ENCODE measurements at regions of chr10 and their contacts with region 1.

Region 1: DNA sequence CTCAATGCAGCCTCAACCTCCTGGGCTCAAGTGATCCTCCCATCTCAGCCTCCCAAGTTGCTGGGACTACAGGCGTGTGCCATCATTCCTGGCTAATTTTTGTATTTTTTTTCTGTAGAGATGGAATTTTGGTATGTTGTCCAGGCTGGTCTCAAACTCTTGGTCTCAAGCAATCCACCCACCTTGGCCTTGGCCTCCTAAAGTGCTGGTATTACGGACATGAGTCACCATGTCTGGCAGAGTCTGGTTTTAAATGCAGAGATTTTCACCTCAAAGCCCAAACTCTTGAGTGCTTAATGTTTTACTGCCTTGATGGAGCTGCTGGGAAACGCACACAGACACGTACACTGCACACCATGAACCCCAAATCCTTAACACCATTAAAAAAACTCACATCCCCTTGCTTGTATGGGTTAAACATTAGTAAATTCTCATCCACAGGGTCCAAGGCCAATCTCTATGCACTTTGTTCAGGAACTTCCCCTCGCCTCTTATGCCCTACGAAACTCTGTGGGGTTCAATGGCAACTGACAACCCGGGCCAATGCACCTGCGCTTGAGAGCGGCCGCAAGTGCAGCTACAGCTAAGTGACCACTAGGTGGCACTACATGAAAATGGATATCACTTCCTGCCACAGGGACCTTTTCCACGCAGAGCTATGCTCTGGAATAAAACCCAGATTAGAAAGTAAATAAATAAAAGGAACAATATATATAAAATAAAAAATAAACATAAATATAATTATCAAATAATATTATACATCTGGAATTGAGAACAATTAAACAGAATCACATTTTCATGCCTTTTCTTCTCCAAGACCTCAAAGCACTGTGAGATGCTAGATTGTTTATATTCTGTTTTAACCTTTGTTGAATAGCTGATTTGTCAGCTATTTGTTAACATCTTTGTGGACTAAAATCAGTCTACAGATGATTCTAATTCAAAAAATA is 66.9 kb upstream of the AFAP1L2 start:
- H3K4me3 ChIP-seq: no peak overlapping the region
- H3K27ac ChIP-seq: no peak overlapping the region
- H3K4me1 ChIP-seq: no peaks in the 10 kb centered on the region
- CTCF ChIP-seq: 0 out of 2 replicates have a peak, but pooled peaks have one; percentile 26

Region 2: GRCh38 chr10:114458955-114459354 is 12.3 kb before region 1 on chr10:
- CTCF ChIA-PET with region 1: interaction called, 15 read pairs
- POLR2A ChIA-PET with region 1: interaction called, 3 read pairs
- H3K4me3 ChIP-seq: no peak overlapping the region
- H3K27ac ChIP-seq: no peak overlapping the region
- H3K4me1 ChIP-seq: no peaks in the 10 kb centered on the region
- CTCF ChIP-seq: no peak

Region 3: DNA sequence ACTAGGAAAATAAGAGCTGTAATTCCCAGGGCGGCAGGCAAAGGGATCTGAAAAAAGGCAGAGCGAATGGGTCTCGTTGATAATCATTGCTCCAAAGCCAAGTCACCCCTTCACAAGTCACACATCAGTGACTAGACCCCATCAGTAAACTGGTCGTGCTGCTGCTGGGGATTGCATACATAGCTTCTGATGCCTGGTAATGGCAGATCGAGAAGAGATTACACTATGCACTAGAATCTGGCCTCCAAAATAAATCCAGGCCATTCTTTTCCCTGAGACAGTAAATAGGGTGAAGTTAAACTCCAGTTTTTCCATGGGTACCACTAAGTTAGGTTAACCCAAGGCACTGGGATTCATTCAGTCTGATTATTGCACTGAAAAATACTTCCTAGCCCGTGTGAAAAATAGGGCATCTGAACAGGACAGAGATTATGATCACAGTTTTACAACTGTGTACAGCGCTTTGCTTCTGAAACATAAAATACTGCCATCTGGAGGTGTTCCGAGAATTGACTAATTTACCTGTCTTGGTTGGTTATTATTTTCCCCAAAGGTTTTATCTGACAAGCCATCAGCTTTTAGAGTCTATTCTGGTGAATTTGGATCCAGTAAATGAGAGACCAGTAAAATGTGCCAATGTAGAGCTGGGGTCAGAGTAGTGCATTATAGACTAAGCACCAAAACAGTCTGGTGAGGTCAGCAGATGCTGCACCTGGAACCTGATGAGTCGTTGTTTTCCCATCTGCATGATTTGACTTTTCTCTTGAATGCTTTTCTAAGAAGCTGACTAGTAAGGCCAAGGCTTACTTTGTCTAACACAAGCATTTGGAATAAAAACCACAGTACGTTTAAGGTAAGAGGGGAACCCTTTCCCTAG is 15.9 kb after region 1 on chr10:
- CTCF ChIA-PET with region 1: interaction called, 40 read pairs
- POLR2A ChIA-PET with region 1: no interaction called
- H3K4me3 ChIP-seq: no peak overlapping the region
- H3K27ac ChIP-seq: no peak overlapping the region
- H3K4me1 ChIP-seq: no peaks in the 10 kb centered on the region
- CTCF ChIP-seq: no peak

Region 4: DNA sequence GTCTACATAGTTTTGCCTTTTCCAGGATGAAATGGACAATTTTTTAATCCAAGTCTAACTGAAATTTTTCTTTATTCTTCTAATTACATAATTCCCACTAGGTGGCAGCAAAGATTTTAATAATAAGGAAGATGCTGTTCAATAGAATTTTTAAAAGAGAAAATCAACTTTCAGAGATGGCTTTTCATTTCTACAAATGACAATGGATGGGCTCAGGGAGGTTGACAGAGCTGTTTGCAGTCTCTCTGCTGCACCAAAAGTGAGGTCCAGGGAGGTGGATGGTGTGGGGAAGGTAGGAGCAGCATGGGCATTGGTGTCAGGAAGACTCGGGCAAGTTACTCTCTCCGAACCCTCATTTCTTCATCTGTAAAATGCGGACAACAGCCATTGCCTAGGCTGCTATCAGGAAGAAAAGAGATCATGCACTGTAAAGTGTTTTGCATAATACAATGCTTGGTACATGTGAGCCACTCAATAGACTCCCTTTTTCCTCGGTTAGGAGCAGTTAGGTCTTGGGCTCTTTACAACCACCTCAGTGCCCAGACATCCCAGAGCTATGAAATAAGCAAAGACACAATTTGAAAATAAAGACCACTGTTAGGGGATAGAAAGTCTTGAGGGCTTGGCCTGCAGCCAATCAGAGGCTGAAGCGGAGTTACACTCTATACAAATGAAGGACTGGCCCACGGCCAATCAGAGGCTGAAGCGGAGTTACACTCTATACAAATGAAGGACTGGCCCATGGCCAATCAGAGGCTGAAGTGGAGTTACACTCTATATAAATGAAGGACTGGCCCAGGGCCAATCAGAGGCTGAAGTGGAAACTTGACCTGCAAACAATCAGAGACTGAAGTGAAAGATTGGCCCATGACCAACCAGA is 79.8 kb after region 1 on chr10:
- CTCF ChIA-PET with region 1: interaction called, 16 read pairs
- POLR2A ChIA-PET with region 1: no interaction called
- H3K4me3 ChIP-seq: no peak overlapping the region
- H3K27ac ChIP-seq: peak overlapping the region; percentile 38
- H3K4me1 ChIP-seq: peaks cover 10% of the 10 kb centered on the region
- CTCF ChIP-seq: no peak

Region 5: GRCh38 chr10:114703377-114704107 is 232.3 kb after region 1 on chr10:
- CTCF ChIA-PET with region 1: interaction called, 12 read pairs
- POLR2A ChIA-PET with region 1: no interaction called
- H3K4me3 ChIP-seq: no peak overlapping the region
- H3K27ac ChIP-seq: no peak overlapping the region
- H3K4me1 ChIP-seq: peaks cover 10% of the 10 kb centered on the region; the same call in 1 of the 2 replicates
- CTCF ChIP-seq: peak; percentile 52

Region 6: GRCh38 chr10:114779803-114780609 is 308.8 kb after region 1 on chr10:
- CTCF ChIA-PET with region 1: interaction called, 12 read pairs
- POLR2A ChIA-PET with region 1: no interaction called
- H3K4me3 ChIP-seq: no peak overlapping the region
- H3K27ac ChIP-seq: peak overlapping the region; percentile 89
- H3K4me1 ChIP-seq: peaks cover 19% of the 10 kb centered on the region
- CTCF ChIP-seq: no peak

Region 7: DNA sequence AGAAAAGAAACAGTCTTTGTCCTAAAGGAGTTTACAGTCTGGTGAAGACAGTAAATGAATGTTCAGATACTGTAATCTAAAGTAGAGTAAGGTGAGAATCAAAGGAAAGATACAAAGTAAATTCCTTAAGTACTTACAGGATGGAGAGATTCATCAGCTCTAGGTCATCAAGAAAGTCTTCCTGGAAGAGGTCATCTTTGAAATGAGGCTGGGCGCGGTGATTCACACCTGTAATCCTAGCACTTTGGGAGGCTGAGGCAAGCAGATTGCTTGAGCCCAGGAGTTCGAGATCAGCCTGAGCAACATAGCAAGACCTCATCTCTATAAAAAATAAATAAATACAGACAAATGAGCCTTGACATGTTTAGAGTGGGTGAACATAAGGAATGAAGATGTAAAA is 368.7 kb after region 1 on chr10:
- CTCF ChIA-PET with region 1: no interaction called
- POLR2A ChIA-PET with region 1: no interaction called
- H3K4me3 ChIP-seq: no peak overlapping the region
- H3K27ac ChIP-seq: no peak overlapping the region
- H3K4me1 ChIP-seq: no peaks in the 10 kb centered on the region
- CTCF ChIP-seq: no peak

Measured in HEK293 (cell line).